B cell (primary cell): ENCODE measurements at regions of chr3 and their contacts with region 1.

Region 1: DNA sequence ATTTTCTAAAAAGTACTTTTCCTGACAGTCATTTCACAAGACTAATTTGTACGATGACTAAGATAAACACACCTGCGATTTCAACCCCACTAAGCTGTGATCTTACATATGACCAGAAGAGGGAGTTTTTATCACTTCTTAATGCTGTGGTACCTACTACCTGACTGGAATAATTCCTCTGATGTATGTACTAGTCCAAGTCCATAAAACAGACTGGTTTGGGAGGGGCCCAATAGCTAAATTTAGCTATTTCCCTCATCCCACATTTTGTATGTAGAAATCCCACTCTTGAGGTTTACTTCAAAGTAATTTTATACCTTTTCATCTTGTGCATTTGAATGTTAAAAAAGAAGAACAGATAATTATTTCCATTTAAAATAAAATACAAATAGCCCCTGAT is 49.7 kb upstream of the SCAANT1 start:
- DNase-seq: peak; percentile 61
- ATAC-seq: peak; percentile 53
- H3K4me3 ChIP-seq: no peak overlapping the region
- H3K4me3 Mint-ChIP-seq: no peak overlapping the region
- H3K27ac ChIP-seq: no peak overlapping the region
- H3K27ac Mint-ChIP-seq: no peak overlapping the region
- H3K4me1 ChIP-seq: peaks cover 7 to 9% of the 10 kb centered on the region in 2 donors
- H3K4me1 Mint-ChIP-seq: peaks cover 37% of the 10 kb centered on the region
- H3K27me3 ChIP-seq: no peaks in the 10 kb centered on the region
- H3K27me3 Mint-ChIP-seq: no peaks in the 10 kb centered on the region
- CTCF ChIP-seq: peak; percentile 84

Region 2: DNA sequence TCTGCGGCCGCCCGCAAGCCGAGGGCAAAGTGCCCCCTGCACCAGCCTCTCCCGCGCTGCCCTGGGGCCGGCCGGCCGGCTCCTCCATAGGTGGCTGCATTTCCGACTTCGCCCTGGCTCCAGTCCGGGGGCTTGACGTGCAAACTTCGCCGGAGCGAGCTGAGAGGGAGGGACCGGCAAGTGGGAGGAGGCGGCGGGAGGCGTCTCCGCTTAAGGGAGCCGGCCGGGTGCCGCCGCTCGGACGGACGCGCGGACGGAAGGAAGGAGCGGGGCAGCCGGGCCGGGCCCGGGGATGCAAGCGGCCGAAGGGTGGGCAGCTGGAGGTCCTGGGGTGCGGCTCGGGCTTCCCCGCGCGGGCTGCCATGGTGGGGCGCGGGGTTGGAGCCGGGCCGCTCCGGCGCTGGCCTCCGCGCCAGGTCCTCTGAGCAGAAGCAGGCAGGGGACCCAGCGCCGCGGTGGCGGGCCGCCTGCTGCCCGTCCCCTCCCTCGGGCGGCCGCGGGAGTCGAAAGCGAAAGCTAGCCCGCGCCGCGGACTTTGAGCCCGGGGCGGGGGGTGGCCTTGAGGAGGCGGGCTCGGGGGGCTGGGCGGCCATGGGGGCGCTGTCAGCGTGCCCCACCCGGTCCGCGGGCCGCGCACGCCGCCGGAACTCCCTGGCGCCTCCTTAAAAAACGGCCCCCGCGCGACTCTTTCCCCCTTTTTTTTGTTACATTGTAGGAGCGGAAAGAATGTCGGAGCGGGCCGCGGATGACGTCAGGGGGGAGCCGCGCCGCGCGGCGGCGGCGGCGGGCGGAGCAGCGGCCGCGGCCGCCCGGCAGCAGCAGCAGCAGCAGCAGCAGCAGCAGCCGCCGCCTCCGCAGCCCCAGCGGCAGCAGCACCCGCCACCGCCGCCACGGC is 49.8 kb before region 1 on chr3 and contains the start of gene SCAANT1:
- CTCF ChIA-PET with region 1: interaction called, 12 read pairs
- POLR2A ChIA-PET with region 1: no interaction called
- intact Hi-C with region 1: loop called (anchors 5 kb)
- DNase-seq: peak; percentile 89
- ATAC-seq: peak; percentile 70
- H3K4me3 ChIP-seq: peak within 1 kb of the TSS; percentile 54 to 73 (median 63)
- H3K4me3 Mint-ChIP-seq: peak within 1 kb of the TSS; percentile 95
- H3K27ac ChIP-seq: peak within 1 kb of the TSS; percentile 70 to 87
- H3K27ac Mint-ChIP-seq: peak within 1 kb of the TSS; percentile 97
- H3K4me1 ChIP-seq: peaks cover 17 to 25% of the 10 kb centered on the region in 2 donors
- H3K4me1 Mint-ChIP-seq: peaks cover 28% of the 10 kb centered on the region
- H3K27me3 ChIP-seq: no peaks in the 10 kb centered on the region
- H3K27me3 Mint-ChIP-seq: no peaks in the 10 kb centered on the region
- CTCF ChIP-seq: no peak
- total RNA-seq, gene SCAANT1: 1.7 TPM in 1 of 2 replicates, not detected in the other

Region 3: DNA sequence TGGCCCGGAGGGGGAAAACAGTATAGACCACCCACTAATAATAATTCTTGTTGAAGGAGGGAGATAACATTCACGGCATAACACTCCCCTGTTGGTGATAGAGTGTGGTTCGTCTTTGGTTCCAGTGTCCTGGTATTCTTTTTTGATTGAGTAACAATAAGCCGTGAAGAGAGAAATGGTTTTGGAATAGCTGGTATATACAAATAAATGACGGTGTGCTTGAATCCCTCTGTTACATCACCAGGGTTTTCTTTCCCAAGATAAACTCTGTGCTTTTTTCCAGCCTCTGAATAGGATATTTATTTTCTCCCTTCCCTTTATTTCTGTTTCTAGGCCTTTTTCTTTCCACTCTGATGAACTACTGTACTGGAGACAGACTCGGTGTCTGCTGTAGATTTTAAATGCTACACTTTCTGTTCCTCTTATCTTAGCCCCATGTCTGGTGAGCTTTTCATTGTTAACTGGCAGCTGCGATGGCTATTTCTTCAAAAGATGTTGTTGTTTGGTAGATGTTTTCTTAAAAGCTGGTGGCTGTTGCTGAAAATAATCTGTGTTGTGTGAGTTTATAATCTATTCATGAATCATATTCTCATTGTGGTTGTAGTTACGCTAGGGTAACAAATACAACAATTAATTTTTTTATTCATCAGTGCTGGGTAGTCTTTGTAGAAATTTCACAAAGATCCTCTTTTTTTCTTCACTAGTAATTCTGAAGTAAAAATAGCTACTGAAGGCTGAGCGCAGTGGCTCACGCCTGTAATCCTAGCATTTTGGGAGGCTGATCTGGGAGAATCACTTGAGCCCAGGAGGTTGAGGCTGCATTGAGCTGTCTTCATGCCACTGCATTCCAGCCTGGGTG is 34.2 kb before region 1 on chr3:
- CTCF ChIA-PET with region 1: interaction called, 18 read pairs
- POLR2A ChIA-PET with region 1: no interaction called
- intact Hi-C with region 1: no loop called
- DNase-seq: peak; percentile 68
- ATAC-seq: peak; percentile 91
- H3K4me3 ChIP-seq: peak overlapping the region in 1 of 5 experiments; percentile 11
- H3K4me3 Mint-ChIP-seq: peak overlapping the region; percentile 33
- H3K27ac ChIP-seq: peak overlapping the region; percentile 33 to 76
- H3K27ac Mint-ChIP-seq: peak overlapping the region; percentile 84
- H3K4me1 ChIP-seq: peaks cover 58 to 63% of the 10 kb centered on the region in 2 donors
- H3K4me1 Mint-ChIP-seq: peaks cover 80% of the 10 kb centered on the region
- H3K27me3 ChIP-seq: no peaks in the 10 kb centered on the region
- H3K27me3 Mint-ChIP-seq: no peaks in the 10 kb centered on the region
- CTCF ChIP-seq: no peak

Region 4: GRCh38 chr3:63937661-63938651 is 23.9 kb before region 1 on chr3:
- CTCF ChIA-PET with region 1: interaction called, 28 read pairs
- POLR2A ChIA-PET with region 1: no interaction called
- intact Hi-C with region 1: no loop called
- DNase-seq: peak; percentile 41
- ATAC-seq: peak; percentile 56
- H3K4me3 ChIP-seq: no peak overlapping the region
- H3K4me3 Mint-ChIP-seq: peak overlapping the region; percentile 3
- H3K27ac ChIP-seq: peak overlapping the region in 1 of 2 donors; percentile 25
- H3K27ac Mint-ChIP-seq: peak overlapping the region; percentile 50
- H3K4me1 ChIP-seq: peaks cover 34 to 37% of the 10 kb centered on the region in 2 donors
- H3K4me1 Mint-ChIP-seq: peaks cover 46% of the 10 kb centered on the region
- H3K27me3 ChIP-seq: no peaks in the 10 kb centered on the region
- H3K27me3 Mint-ChIP-seq: no peaks in the 10 kb centered on the region
- CTCF ChIP-seq: no peak

Region 5: GRCh38 chr3:63975723-63976122 is 13.8 kb after region 1 on chr3:
- CTCF ChIA-PET with region 1: interaction called, 16 read pairs
- POLR2A ChIA-PET with region 1: no interaction called
- intact Hi-C with region 1: no loop called
- DNase-seq: no peak
- ATAC-seq: no peak
- H3K4me3 ChIP-seq: no peak overlapping the region
- H3K4me3 Mint-ChIP-seq: no peak overlapping the region
- H3K27ac ChIP-seq: no peak overlapping the region
- H3K27ac Mint-ChIP-seq: no peak overlapping the region
- H3K4me1 ChIP-seq: peaks cover 0 to 8% of the 10 kb centered on the region in 2 donors
- H3K4me1 Mint-ChIP-seq: peaks cover 30% of the 10 kb centered on the region
- H3K27me3 ChIP-seq: no peaks in the 10 kb centered on the region
- H3K27me3 Mint-ChIP-seq: no peaks in the 10 kb centered on the region
- CTCF ChIP-seq: no peak

Region 6: GRCh38 chr3:63993653-63994079 is 31.8 kb after region 1 on chr3:
- CTCF ChIA-PET with region 1: interaction called, 25 read pairs
- POLR2A ChIA-PET with region 1: no interaction called
- intact Hi-C with region 1: loop called (anchors 2 kb)
- DNase-seq: peak; percentile 60
- ATAC-seq: peak; percentile 75
- H3K4me3 ChIP-seq: no peak overlapping the region
- H3K4me3 Mint-ChIP-seq: no peak overlapping the region
- H3K27ac ChIP-seq: no peak overlapping the region
- H3K27ac Mint-ChIP-seq: no peak overlapping the region
- H3K4me1 ChIP-seq: no peaks in the 10 kb centered on the region
- H3K4me1 Mint-ChIP-seq: no peaks in the 10 kb centered on the region
- H3K27me3 ChIP-seq: no peaks in the 10 kb centered on the region
- H3K27me3 Mint-ChIP-seq: no peaks in the 10 kb centered on the region
- CTCF ChIP-seq: peak; percentile 96

Region 7: DNA sequence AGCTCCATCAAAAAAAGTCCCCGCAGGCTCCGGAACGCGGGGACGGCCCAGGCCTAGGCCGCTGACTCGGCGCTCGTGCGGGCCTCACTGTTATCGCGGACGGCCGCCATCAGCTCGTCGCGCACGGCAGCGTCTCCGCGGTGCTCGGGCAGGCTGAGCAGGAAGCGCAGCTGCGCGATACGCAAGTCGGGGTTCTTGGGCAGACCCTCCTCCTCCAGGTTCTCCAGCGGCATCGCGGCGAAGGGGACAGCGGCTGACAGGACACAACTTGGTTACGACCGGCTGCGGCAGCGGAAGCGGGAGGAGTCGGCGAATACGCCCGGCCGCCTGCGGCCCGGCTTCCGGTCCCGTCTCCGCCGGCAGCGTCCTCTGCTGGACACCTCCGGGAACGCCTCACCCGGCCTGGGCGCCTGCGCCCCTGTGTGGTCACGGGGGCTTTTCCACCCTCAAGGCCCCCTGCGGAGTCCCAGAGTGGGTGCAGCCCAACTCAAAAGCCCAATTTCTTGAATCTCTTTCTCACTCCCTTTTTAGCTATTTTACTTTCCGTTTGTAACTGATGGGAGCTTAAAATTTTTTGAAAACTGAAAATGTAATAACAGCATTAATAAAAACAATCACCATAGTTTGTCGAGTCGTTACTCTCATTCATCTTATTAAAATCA is 61.4 kb after region 1 on chr3 and contains the start of gene PSMD6:
- CTCF ChIA-PET with region 1: interaction called, 3 read pairs
- POLR2A ChIA-PET with region 1: interaction called, 5 read pairs
- intact Hi-C with region 1: loop called (anchors 5 kb)
- DNase-seq: peak; percentile 94
- ATAC-seq: peak; percentile 98
- H3K4me3 ChIP-seq: peak within 1 kb of the TSS; percentile 85 to 92 (median 87)
- H3K4me3 Mint-ChIP-seq: peak within 1 kb of the TSS; percentile 91
- H3K27ac ChIP-seq: peak within 1 kb of the TSS; percentile 73 to 90
- H3K27ac Mint-ChIP-seq: peak within 1 kb of the TSS; percentile 86
- H3K4me1 ChIP-seq: peaks cover 15 to 18% of the 10 kb centered on the region in 2 donors
- H3K4me1 Mint-ChIP-seq: peaks cover 26% of the 10 kb centered on the region
- H3K27me3 ChIP-seq: peaks cover 0 to 6% (median 4%) of the 10 kb centered on the region in 4 experiments
- H3K27me3 Mint-ChIP-seq: peaks cover 4% of the 10 kb centered on the region
- CTCF ChIP-seq: peak; percentile 100
- total RNA-seq, gene PSMD6: 63.4 and 64.7 TPM in 2 replicates

Region 8: DNA sequence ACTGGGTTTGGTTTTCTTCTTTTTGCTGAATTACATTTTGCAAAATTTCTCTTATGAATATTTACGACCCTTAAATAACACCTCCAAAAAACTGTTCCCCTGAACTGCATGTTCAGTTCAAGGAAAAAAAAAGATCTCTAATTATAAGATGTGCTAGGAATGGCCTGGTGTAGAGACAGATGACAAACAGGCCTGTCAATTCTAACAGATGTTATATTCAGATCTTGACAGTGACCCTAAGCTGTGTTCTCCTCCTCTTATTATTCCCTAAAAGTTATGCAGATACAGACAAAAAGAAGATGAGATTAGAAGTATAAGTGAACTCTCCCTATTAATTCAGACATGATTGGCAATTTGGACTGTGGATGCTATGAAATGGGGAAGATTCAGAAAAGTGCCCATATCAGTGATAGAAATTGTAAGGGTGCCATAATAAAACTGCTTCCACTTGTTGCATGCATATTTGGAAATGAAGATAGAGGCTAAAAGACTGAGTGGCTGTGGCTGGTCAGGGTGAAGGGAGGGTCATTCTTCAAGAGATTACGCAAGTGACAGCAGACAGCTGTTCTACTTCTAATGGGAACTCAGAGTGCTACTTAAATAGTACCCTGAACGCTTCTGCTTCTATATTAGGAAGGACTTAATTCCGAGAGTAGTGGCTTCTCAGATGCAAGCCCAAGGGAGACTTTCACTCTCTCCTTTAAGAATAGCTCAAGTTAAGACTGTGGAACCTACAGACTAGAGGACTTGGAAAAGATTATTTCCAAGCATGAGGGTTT is 650.4 kb after region 1 on chr3:
- CTCF ChIA-PET with region 1: no interaction called
- POLR2A ChIA-PET with region 1: no interaction called
- intact Hi-C with region 1: no loop called
- DNase-seq: no peak
- ATAC-seq: no peak
- H3K4me3 ChIP-seq: no peak overlapping the region
- H3K4me3 Mint-ChIP-seq: no peak overlapping the region
- H3K27ac ChIP-seq: no peak overlapping the region
- H3K27ac Mint-ChIP-seq: no peak overlapping the region
- H3K4me1 ChIP-seq: no peaks in the 10 kb centered on the region
- H3K4me1 Mint-ChIP-seq: no peaks in the 10 kb centered on the region
- H3K27me3 ChIP-seq: no peaks in the 10 kb centered on the region
- H3K27me3 Mint-ChIP-seq: no peaks in the 10 kb centered on the region
- CTCF ChIP-seq: no peak